Prostate gland (tissue), 2 donors: ENCODE measurements at regions of chr12 and their contacts with region 1.

Region 1: DNA sequence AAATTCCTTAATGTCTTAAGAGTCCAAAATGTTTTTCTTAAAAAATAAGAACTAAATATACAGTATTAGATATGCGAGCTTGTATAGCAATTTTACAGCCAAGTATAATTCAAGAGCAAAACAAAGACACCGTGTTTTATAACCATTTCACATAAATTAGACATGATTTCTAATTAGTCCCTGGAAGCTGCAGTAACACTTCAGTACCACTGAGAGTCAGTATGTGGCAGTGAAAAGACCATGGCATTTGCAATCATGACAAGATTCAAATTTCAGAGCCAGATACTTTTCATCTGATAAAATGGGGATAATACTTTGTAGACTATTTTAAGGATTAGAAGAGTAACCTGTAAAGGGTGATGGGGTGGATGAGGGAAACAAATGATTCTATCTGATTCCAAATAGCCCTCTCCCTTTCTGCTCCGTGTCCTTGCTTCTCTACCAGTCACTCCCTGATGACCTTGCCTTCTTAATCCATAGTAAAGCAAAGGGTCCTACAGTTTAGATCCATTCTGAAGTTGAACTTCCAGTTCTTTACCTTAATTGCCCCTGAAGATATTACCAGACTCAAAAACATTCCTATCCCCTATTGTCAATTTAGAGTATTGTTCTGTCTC is 145.4 kb upstream of the ABCD2 start:
- DNase-seq: no peak
- H3K4me3 ChIP-seq: no peak overlapping the region
- H3K27ac ChIP-seq: no peak overlapping the region
- H3K4me1 ChIP-seq: no peaks in the 10 kb centered on the region
- H3K27me3 ChIP-seq: no peaks in the 10 kb centered on the region
- CTCF ChIP-seq: peak; percentile 39 to 86 (median 62)
- POLR2A ChIP-seq: no peak

Region 2: DNA sequence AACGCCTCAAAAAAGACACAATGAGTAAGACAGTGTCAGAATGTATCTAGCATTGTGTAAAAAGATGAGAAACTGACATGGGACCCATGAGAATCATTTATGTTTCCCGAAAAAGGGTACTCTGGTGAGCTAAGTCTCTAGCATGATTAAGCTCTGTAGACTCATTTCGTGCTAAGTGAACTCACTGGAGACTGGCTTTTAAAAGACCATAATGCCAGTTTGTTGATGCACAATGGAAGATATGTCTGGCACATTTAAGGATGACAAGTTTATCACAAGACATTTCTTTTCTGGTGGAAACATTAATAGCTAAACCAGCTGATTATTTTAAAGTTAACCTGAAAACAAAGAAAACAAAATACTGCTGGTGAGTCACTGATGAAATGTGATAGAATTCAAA is 107.4 kb after region 1 on chr12:
- intact Hi-C with region 1: no loop called
- DNase-seq: no peak
- H3K4me3 ChIP-seq: no peak overlapping the region
- H3K27ac ChIP-seq: no peak overlapping the region
- H3K4me1 ChIP-seq: no peaks in the 10 kb centered on the region
- H3K27me3 ChIP-seq: no peaks in the 10 kb centered on the region
- CTCF ChIP-seq: no peak
- POLR2A ChIP-seq: no peak

Region 3: GRCh38 chr12:39990122-39991101 is 225.4 kb after region 1 on chr12:
- intact Hi-C with region 1: loop called (anchors 5 kb)
- DNase-seq: peak; percentile 58
- H3K4me3 ChIP-seq: no peak overlapping the region
- H3K27ac ChIP-seq: no peak overlapping the region
- H3K4me1 ChIP-seq: no peaks in the 10 kb centered on the region
- H3K27me3 ChIP-seq: no peaks in the 10 kb centered on the region
- CTCF ChIP-seq: peak; percentile 24 to 86 (median 70)
- POLR2A ChIP-seq: no peak